ENCODE measurements at regions of chr1 and their contacts with region 1.

Region 1: GRCh38 chr1:151739590-151740375 is 18.5 kb downstream of the RIIAD1 start:
- DNase-seq: no peak
- H3K4me3 ChIP-seq: no peak overlapping the region
- H3K27ac ChIP-seq: no peak overlapping the region
- H3K27me3 ChIP-seq: peaks cover 28% of the 10 kb centered on the region
- CTCF ChIP-seq: no peak

Region 2: DNA sequence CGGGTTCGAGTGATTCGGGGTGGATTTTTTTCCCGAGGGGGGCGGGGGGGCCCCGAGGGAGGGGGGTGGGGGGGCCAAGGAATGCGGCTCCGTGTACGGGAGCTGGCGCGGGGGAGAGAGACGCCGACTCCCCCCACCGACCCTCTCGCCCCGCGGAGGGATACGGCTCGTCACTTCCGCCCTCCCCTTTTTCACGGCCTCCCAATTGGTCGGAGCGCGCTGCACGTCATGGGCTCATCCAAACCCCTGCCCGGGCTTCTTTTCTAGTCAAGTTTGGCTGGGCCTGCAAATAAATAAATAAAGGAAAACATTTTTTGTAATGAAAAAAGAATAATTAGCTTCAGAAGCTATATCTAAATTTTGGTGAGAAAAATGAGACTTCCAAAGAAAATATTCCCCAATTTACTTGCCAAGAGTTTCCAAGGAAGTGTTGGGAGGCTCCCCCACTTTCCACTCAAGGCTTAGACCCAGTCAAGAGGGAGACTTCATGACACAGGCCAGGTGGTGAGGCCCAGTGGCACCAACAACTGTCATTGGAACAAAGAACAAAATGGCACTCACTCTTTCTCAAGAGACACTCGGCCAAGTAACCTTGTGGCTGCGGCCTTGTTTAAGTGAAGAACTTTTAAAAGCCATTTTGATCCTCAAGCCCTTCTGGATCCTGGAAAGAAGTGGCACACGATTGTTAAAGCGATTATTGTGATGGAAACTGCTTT is 280.3 kb before region 1 on chr1 and contains the start of gene POGZ:
- CTCF ChIA-PET with region 1: no interaction called
- POLR2A ChIA-PET with region 1: no interaction called
- DNase-seq: peak; percentile 95
- H3K4me3 ChIP-seq: peak within 1 kb of the TSS; percentile 73
- H3K27ac ChIP-seq: peak within 1 kb of the TSS; percentile 93
- H3K27me3 ChIP-seq: peaks cover 4% of the 10 kb centered on the region
- CTCF ChIP-seq: no peak
- polyA plus RNA-seq, gene POGZ: 43.4 and 45.7 TPM in 2 replicates

Region 3: DNA sequence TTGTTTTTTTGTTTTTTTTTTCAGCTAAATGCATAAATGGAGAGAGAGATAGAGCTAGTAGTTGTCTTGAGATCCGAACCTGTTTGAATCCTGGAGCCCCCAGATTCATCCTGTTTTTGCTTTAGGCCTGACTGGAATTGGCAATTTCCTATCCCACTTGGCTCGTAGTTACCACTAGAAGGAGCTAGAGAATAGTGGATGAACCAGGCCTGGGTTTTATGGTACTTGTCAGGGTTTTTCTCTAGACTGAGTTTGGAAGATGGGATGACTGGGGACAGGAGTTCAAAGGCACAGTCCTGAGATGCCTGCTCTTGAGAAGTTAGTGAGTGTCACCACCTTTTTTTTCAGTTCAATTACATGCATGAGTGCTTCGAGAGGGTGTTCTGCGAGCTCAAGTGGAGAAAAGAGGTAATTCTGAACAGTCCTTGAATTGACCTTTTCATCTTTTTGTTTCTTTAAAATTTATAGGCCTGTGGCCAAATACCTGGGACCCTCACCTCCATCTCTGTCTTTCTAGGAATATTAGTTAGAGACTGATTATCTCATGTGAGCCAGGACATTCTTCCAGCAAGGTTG is 46.6 kb before region 1 on chr1:
- CTCF ChIA-PET with region 1: interaction called, 21 read pairs
- POLR2A ChIA-PET with region 1: no interaction called
- DNase-seq: no peak
- H3K4me3 ChIP-seq: no peak overlapping the region
- H3K27ac ChIP-seq: no peak overlapping the region
- H3K27me3 ChIP-seq: no peaks in the 10 kb centered on the region
- CTCF ChIP-seq: peak; percentile 82

Region 4: GRCh38 chr1:151720974-151721787 is 18.6 kb before region 1 on chr1 and contains the start of gene RIIAD1:
- CTCF ChIA-PET with region 1: interaction called, 16 read pairs
- POLR2A ChIA-PET with region 1: no interaction called
- DNase-seq: no peak
- H3K4me3 ChIP-seq: peak within 1 kb of the TSS; percentile 53
- H3K27ac ChIP-seq: no peak within 1 kb of the TSS
- H3K27me3 ChIP-seq: peaks cover 53% of the 10 kb centered on the region
- CTCF ChIP-seq: no peak
- polyA plus RNA-seq, gene RIIAD1: not detected in 2 replicates

Measured in AG04450 (cell line).